ENCODE measurements at regions of chr19 and their contacts with region 1.

Region 1: GRCh38 chr19:23273590-23274413 is 23.6 kb upstream of the ZNF724 start:
- DNase-seq: peak; percentile 95 to 96
- H3K4me3 ChIP-seq: peak overlapping the region; percentile 90 to 99 (median 90)
- H3K27ac ChIP-seq: peak overlapping the region; percentile 89 to 92 (median 90)
- H3K4me1 ChIP-seq: no peaks in the 10 kb centered on the region
- H3K27me3 ChIP-seq: no peaks in the 10 kb centered on the region
- CTCF ChIP-seq: no peak
- POLR2A ChIP-seq: peak in 1 of 2 donors; percentile 95

Region 2: DNA sequence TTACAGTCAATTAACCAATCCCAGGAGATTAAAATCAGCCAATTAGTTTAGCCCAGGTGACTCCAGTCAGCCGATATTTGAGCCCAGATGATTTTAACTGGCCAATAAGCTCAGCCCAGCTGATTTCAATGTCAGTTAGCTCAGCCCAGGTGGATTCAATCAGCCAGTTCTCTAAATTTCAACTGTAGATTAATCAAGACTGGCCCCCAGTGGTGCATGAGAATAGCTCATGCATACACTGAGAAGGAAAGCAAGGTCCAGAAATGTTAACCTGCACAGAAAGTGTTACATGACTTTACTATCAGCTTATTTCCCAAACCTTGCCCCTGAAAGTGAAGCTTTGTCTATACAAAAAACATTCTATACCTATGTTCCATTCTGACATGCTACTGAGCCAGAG is 31.8 kb after region 1 on chr19:
- intact Hi-C with region 1: no loop called
- DNase-seq: no peak
- H3K4me3 ChIP-seq: no peak overlapping the region
- H3K27ac ChIP-seq: no peak overlapping the region
- H3K4me1 ChIP-seq: no peaks in the 10 kb centered on the region
- H3K27me3 ChIP-seq: no peaks in the 10 kb centered on the region
- CTCF ChIP-seq: no peak
- POLR2A ChIP-seq: no peak

Region 3: DNA sequence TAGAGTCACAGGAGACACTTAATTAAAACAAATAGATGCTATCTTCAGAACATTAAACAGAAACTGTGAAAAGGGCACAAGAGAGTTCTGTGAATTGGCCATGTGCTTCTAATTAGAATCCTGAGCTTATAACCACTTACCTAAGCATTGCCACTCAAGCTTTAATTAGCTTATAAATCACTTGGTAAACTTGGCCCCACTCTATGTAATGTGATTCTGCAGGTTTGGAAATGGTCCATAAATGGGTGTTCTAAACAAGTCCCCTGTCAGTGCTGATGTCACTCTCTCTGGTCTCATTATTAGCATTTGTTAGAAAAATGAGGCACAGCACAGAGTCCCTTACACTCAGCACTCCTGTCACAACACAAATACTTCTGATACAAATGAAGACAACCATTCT is 103.5 kb after region 1 on chr19:
- intact Hi-C with region 1: no loop called
- DNase-seq: no peak
- H3K4me3 ChIP-seq: no peak overlapping the region
- H3K27ac ChIP-seq: no peak overlapping the region
- H3K4me1 ChIP-seq: peaks cover 0 to 9% of the 10 kb centered on the region in 2 donors
- H3K27me3 ChIP-seq: no peaks in the 10 kb centered on the region
- CTCF ChIP-seq: no peak
- POLR2A ChIP-seq: no peak

Region 4: DNA sequence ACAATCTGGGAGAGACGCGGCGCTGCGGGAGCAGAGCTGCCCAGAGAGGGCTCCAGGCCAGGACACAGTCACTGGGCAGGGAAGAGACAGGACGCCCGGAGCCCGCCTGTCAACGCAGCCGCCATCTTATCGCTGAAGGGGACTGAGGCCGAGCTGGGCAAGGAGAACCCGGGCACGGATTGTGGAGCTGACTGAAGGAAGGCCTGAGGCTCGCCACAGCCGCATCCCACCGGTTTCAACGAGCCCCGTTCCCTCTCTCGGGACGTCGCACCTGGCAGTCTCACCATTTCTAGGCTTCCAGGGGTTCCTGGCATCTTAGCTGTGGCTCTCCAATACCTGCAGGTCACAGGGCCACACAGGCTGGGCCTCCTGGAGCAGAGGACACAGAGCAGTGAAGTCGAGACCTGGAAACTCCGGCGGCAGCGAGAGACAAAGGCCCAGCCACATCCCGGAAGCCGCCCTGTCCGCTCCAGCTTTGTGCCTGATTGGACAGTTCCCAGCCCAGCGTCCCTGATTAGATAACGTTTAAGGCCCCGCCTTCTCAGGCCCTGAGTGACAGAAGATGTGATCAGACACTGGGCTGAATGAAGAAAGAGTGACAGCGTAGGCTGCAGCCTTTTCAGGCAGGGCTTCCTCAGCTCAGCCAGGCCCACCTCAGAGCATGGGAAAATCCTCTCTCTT is 121.4 kb after region 1 on chr19 and contains the start of gene ZNF91:
- intact Hi-C with region 1: loop called (anchors 10 kb)
- DNase-seq: peak; percentile 99
- H3K4me3 ChIP-seq: peak within 1 kb of the TSS; percentile 60 to 81 (median 75)
- H3K27ac ChIP-seq: peak within 1 kb of the TSS; percentile 61 to 92 (median 83)
- H3K4me1 ChIP-seq: peaks cover 11 to 32% of the 10 kb centered on the region in 2 donors
- H3K27me3 ChIP-seq: no peaks in the 10 kb centered on the region
- CTCF ChIP-seq: no peak
- POLR2A ChIP-seq: peak in 1 of 2 donors; percentile 97
- total RNA-seq, gene ZNF91: 92.5 to 220 (median 122) TPM

Region 5: DNA sequence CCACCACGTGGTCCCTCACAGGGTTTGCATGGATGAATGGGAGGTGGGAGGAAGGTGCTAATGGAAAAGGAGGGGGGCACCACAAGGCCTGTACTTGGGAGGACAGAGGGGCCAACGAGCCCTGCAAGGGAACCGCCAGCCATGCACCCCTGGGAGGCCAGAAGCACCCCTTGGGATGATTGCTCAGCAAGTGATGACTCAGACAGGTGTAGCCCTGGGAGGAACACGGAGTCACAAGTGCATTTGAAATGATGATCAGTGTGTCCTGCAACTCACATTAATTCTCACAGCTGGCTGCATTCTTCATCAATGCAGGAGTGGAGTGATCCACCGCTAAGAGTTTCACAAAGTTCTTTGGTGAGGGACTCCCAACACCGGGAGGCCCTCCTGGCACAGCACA is 730.4 kb after region 1 on chr19:
- intact Hi-C with region 1: no loop called
- DNase-seq: no peak
- H3K4me3 ChIP-seq: no peak overlapping the region
- H3K27ac ChIP-seq: no peak overlapping the region
- H3K4me1 ChIP-seq: no peaks in the 10 kb centered on the region
- H3K27me3 ChIP-seq: no peaks in the 10 kb centered on the region
- CTCF ChIP-seq: no peak
- POLR2A ChIP-seq: no peak

Measured in thyroid gland (tissue), 4 donors.